RWPE1 (cell line): ENCODE measurements at regions of chr6 and their contacts with region 1.

Region 1: GRCh38 chr6:2634139-2634964 is 116.4 kb downstream of the MYLK4 start:
- DNase-seq: peak; percentile 77
- H3K27ac ChIP-seq: peak overlapping the region; percentile 76
- CTCF ChIP-seq: peak; percentile 97

Region 2: DNA sequence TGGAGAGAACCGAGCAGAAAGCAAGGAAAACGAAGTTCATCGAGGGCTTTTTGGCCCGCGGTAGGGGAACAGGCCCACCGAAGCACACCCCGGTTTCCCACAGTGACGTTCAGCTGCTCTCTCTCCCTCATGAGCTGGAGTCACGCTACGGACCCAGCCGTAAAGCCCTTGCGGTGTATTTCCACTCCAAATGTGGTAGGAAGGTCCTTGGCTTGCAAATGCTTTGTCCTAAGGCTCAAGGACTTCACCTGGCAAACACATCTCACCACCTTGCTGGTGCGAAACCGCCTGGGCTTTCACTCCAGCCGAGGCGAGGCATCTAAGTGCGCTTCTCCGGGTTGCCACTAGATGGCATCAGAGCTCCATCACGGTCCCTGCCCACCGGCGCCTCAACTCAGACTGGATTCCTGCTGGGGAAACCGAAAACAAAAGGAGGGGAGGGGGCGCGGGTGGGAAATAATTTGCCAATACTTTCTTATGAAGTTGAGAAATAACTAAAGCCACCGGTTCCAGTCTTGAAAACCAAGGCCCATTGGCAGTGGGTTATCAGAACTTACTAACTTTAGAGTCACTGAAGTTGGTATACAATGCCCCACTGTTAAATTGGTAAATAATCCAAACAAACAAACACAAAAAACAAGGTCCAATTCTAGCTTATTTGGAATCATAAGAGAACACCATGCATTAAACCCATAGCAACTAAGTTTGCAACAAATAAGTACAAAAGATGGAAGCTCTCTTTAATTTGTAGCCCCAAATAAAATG is 1038.1 kb before region 1 on chr6:
- CTCF ChIA-PET with region 1: interaction called, 14 read pairs
- POLR2A ChIA-PET with region 1: no interaction called
- DNase-seq: peak; percentile 66
- H3K27ac ChIP-seq: no peak overlapping the region
- CTCF ChIP-seq: peak; percentile 95

Region 3: GRCh38 chr6:2353412-2354137 is 280.8 kb before region 1 on chr6:
- CTCF ChIA-PET with region 1: interaction called, 13 read pairs
- POLR2A ChIA-PET with region 1: no interaction called
- DNase-seq: peak; percentile 61
- H3K27ac ChIP-seq: no peak overlapping the region
- CTCF ChIP-seq: peak; percentile 81

Region 4: DNA sequence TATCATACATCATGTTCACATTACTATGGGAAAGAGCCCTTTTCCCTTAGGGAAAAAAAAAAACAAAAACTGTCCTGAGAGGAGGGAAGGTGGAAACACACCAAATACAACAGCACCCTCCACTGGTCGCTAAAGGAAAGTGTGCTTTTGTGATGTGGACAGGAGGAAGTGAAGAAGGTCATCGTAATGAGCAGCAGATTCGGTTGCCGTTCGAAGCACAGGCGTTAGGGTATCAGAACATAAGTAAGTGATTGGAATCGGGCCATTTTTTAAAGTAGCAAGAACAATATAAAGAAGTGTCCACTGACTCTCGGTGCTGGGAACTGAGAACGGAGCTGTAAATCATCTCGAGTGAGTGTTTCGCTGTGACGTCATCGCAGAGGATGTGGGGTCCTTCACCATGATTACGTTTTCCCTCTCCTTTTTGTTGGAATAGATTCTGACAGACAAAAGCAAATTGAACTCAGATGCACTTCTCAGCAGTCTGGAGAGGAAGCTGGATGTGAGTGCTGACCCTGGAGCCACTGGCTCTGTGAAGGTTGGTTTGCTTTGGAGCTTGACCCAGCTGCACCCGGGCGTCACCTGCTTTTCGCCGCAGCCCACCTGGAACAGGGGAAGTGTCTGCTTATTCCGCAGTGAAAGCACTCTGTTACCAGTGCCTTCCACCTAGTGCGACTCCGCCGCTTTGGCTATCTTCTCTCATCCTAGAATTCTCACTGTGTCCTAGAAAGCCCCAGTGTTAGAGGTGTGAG is 185.4 kb before region 1 on chr6:
- CTCF ChIA-PET with region 1: interaction called, 20 read pairs
- POLR2A ChIA-PET with region 1: no interaction called
- DNase-seq: peak; percentile 68
- H3K27ac ChIP-seq: no peak overlapping the region
- CTCF ChIP-seq: peak; percentile 53